Activated B cell treated with CpG ODN at 0.5 μM for 24 hours (primary cell): ENCODE measurements at regions of chr5 and their contacts with region 1.

Region 1: GRCh38 chr5:93800988-93801811 is 59.8 kb upstream of the POU5F2 start:
- DNase-seq: no peak
- ATAC-seq: no peak
- H3K4me3 Mint-ChIP-seq: no peak overlapping the region
- H3K27ac Mint-ChIP-seq: no peak overlapping the region
- H3K4me1 Mint-ChIP-seq: peaks cover 3% of the 10 kb centered on the region
- H3K27me3 Mint-ChIP-seq: no peaks in the 10 kb centered on the region
- CTCF ChIP-seq: peak; percentile 28

Region 2: GRCh38 chr5:92309336-92309991 is 1491.7 kb before region 1 on chr5:
- CTCF ChIA-PET with region 1: no interaction called
- POLR2A ChIA-PET with region 1: no interaction called
- intact Hi-C with region 1: loop called (anchors 5 kb)
- DNase-seq: no peak
- ATAC-seq: no peak
- H3K4me3 Mint-ChIP-seq: no peak overlapping the region
- H3K27ac Mint-ChIP-seq: no peak overlapping the region
- H3K4me1 Mint-ChIP-seq: no peaks in the 10 kb centered on the region
- H3K27me3 Mint-ChIP-seq: no peaks in the 10 kb centered on the region
- CTCF ChIP-seq: no peak

Region 3: GRCh38 chr5:92909602-92909962 is 891.6 kb before region 1 on chr5:
- CTCF ChIA-PET with region 1: interaction called, 3 read pairs
- POLR2A ChIA-PET with region 1: no interaction called
- intact Hi-C with region 1: loop called (anchors 5 kb)
- DNase-seq: no peak
- ATAC-seq: no peak
- H3K4me3 Mint-ChIP-seq: no peak overlapping the region
- H3K27ac Mint-ChIP-seq: no peak overlapping the region
- H3K4me1 Mint-ChIP-seq: no peaks in the 10 kb centered on the region
- H3K27me3 Mint-ChIP-seq: no peaks in the 10 kb centered on the region
- CTCF ChIP-seq: no peak

Region 4: DNA sequence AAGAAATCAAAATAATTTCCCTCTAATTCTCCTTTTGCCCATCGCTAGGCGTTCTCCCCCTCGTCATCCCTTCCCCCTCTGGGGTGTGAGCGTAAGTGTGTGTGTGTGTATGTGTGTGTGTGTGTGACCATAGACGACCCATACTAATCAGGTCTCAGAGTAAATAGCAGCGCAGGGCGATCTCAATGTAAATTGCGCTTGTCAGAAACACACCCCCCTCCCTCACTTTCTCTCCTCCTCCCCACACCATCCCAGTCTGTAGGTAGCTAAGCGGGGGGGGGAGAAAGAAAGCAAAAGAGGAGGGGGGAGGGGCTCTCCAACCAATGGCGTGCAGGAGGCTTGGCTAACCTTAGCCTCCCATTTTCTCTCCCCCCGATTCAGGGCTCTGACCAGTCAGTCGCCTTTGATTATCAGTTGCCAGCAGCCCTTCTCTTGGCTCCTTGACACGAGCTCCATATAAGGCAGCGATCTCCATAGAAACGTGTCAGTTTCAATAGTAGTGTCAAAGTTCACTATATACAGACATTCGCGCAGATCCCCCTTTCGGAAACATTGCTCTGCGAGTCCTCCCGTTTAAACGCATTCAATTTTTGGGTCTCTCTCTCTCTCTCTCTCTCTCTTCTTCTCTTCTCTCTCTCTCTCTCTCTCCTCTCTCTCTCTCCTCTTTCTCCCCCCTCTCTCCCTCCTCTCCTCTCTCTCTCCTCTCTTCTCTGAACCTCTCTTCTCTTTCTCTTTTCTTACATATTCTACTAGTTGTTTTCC is 218.3 kb before region 1 on chr5 and contains the start of gene NR2F1:
- CTCF ChIA-PET with region 1: interaction called, 3 read pairs
- POLR2A ChIA-PET with region 1: no interaction called
- intact Hi-C with region 1: loop called (anchors 1 kb)
- DNase-seq: no peak
- ATAC-seq: no peak
- H3K4me3 Mint-ChIP-seq: no peak within 1 kb of the TSS
- H3K27ac Mint-ChIP-seq: no peak within 1 kb of the TSS
- H3K4me1 Mint-ChIP-seq: peaks cover 34% of the 10 kb centered on the region
- H3K27me3 Mint-ChIP-seq: peaks cover 34% of the 10 kb centered on the region
- CTCF ChIP-seq: no peak
- total RNA-seq, gene NR2F1: not detected in 2 replicates

Region 5: DNA sequence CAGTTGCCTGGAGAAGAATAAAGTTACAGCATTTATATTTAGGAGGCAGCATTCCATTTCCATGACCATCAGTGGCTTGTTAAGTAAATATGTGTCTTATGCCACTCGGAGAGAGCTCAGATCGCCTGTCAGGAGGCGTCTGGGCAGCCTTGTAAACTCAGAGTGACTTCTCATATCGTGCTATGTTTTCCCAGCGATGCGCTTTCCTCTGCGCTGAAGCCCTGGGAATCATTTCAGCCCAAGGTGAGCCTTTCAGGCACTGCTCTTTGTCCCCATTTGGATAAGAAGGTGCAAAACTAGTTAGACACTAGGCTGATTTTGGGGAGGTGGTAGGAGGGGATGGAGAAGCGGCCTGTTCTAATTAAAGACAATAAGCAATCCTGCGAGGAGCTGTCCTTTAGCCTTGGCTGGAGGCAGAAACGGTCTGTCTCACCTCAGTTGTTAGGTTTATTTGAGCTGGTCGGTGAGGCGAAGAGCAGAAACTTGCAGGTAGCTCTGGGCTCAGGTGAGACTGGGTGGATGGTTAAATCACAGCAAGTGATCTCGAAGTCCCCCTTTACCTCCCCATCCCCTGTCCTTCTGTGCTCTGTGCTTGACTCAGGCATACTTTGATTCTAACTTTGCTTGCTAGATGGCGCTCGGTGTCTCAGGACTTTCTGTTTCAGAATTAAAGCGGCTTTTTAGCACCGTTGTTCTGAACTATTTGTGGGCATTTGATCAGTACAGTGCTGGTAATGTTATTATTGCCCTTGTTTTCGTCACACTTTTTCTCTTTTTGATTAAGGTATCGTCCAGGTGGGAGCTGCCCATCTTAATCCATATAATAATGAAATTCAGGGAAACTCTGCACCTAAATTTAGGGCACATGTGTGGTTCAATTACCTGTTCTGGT is 193.6 kb before region 1 on chr5:
- CTCF ChIA-PET with region 1: interaction called, 12 read pairs
- POLR2A ChIA-PET with region 1: no interaction called
- intact Hi-C with region 1: loop called (anchors 1 kb)
- DNase-seq: no peak
- ATAC-seq: peak; percentile 64
- H3K4me3 Mint-ChIP-seq: peak overlapping the region; percentile 19
- H3K27ac Mint-ChIP-seq: no peak overlapping the region
- H3K4me1 Mint-ChIP-seq: peaks cover 15% of the 10 kb centered on the region
- H3K27me3 Mint-ChIP-seq: peaks cover 76% of the 10 kb centered on the region
- CTCF ChIP-seq: no peak

Region 6: DNA sequence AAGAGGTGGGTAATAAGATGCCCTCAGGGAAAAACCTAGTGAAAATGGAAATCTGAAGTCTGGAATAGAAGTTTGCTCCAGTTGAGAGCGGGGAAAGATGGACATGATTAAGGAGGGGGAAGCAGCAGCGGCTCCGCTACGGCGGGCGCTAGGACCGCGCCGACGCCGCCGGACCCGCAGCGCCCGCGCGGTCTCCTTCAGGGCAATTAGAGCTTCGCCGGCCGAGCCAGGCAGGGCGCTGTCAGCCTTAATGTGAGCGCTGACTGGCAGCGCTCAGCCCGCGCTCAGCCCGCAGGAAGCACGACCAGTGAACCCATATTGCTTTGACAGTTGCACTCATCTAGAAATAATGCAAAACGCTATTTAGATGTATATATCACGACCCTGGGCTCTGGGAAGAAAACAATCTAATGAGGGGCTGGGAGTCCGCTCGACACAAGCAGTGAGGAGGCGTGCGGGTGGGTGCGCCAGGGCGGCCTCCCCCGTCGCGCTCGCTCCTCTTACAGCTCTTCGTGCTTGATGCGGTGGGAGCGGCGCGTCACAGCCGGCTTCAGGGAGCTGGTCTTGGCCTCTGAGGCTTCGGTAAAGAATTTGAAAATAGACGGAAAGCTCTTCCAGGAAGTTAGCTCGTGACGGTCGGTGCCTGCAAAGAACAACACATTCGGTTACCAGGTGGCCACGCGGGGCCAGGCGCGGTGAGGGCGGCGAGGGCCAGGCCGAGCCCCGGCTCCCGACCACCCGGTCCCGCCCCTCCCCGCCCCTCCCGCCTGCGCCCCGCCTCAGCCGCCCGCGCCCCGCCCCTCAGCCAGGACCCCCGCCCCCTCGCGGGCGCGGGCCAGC is 180.5 kb before region 1 on chr5:
- CTCF ChIA-PET with region 1: no interaction called
- POLR2A ChIA-PET with region 1: no interaction called
- intact Hi-C with region 1: loop called (anchors 5 kb)
- DNase-seq: no peak
- ATAC-seq: peak; percentile 89
- H3K4me3 Mint-ChIP-seq: peak overlapping the region; percentile 92
- H3K27ac Mint-ChIP-seq: peak overlapping the region; percentile 64
- H3K4me1 Mint-ChIP-seq: peaks cover 16% of the 10 kb centered on the region
- H3K27me3 Mint-ChIP-seq: peaks cover 2% of the 10 kb centered on the region
- CTCF ChIP-seq: no peak

Region 7: DNA sequence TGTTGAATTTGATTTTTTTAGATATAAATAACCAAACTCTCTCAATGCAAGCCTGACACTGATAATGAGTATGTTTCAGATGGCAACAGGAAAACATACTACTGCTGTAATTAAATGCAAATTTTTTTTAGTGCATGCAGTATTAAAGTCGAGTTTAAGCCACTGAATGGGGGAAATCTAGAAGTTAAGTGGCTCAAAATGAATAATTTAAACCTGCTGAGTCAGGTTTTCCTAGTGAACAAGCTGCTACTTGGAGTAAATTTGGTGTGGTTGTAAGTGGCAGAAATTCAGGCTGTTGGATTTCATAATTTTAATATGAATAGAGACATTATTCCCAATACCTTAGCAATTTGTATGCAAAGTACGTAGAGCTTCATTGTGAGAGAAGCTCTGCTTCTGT is 939.1 kb after region 1 on chr5:
- CTCF ChIA-PET with region 1: no interaction called
- POLR2A ChIA-PET with region 1: no interaction called
- intact Hi-C with region 1: loop called (anchors 2 kb)
- DNase-seq: no peak
- ATAC-seq: no peak
- H3K4me3 Mint-ChIP-seq: no peak overlapping the region
- H3K27ac Mint-ChIP-seq: no peak overlapping the region
- H3K4me1 Mint-ChIP-seq: peaks cover 7% of the 10 kb centered on the region
- H3K27me3 Mint-ChIP-seq: no peaks in the 10 kb centered on the region
- CTCF ChIP-seq: no peak